AG04450 (cell line): ENCODE measurements at regions of chr3 and their contacts with region 1.

Region 1: DNA sequence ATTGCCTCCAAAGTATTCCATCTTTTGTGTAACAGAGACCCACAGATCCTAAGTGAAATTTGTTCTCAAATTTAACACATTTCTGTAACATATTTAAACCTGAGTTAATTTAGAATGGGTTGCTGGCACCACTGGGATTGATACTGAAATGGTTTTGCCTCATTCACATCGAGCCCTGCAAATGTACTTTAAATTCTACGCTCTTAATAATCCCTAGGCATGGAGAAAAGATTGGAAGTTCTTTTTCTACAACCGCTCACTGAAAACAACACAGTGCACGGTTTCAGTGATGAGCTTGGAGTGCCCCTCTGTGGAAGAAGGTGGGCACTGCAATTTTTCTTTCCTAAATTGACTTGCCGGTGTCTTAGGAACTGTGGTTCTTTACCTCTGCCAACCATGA is 109.9 kb upstream of the ATP11B start:
- DNase-seq: peak; percentile 29
- H3K4me3 ChIP-seq: no peak overlapping the region
- H3K27ac ChIP-seq: no peak overlapping the region
- H3K27me3 ChIP-seq: peaks cover 11% of the 10 kb centered on the region
- CTCF ChIP-seq: peak; percentile 94

Region 2: DNA sequence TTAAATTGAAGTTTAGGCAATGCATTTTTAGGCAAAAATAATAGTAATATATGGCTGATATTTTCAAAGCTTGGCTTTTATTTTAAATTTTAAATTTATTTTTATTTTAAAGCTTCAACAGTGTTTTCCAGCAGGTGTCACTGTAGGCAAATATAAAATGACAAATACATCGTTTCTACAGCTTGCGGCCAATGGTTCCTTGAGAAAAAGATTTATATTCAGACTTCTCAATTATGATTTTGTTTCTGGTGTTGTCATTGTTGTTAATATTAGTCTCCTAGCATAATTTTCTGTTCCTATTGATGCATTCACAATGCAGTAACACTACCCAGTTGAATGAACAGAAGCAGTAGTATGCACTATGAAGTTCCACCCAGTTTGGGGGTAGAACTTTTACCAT is 1473.2 kb before region 1 on chr3:
- CTCF ChIA-PET with region 1: interaction called, 19 read pairs
- POLR2A ChIA-PET with region 1: no interaction called
- DNase-seq: no peak
- H3K4me3 ChIP-seq: no peak overlapping the region
- H3K27ac ChIP-seq: no peak overlapping the region
- H3K27me3 ChIP-seq: no peaks in the 10 kb centered on the region
- CTCF ChIP-seq: peak; percentile 39

Region 3: GRCh38 chr3:181700168-181701087 is 983.0 kb before region 1 on chr3:
- CTCF ChIA-PET with region 1: interaction called, 47 read pairs
- POLR2A ChIA-PET with region 1: no interaction called
- DNase-seq: peak; percentile 26
- H3K4me3 ChIP-seq: no peak overlapping the region
- H3K27ac ChIP-seq: no peak overlapping the region
- H3K27me3 ChIP-seq: peaks cover 56% of the 10 kb centered on the region
- CTCF ChIP-seq: peak; percentile 93

Region 4: GRCh38 chr3:181709537-181710279 is 973.7 kb before region 1 on chr3:
- CTCF ChIA-PET with region 1: interaction called, 147 read pairs
- POLR2A ChIA-PET with region 1: no interaction called
- DNase-seq: no peak
- H3K4me3 ChIP-seq: no peak overlapping the region
- H3K27ac ChIP-seq: no peak overlapping the region
- H3K27me3 ChIP-seq: peaks cover 43% of the 10 kb centered on the region
- CTCF ChIP-seq: peak; percentile 76

Region 5: GRCh38 chr3:182342252-182342862 is 341.1 kb before region 1 on chr3:
- CTCF ChIA-PET with region 1: no interaction called
- POLR2A ChIA-PET with region 1: no interaction called
- DNase-seq: no peak
- H3K4me3 ChIP-seq: no peak overlapping the region
- H3K27ac ChIP-seq: no peak overlapping the region
- H3K27me3 ChIP-seq: no peaks in the 10 kb centered on the region
- CTCF ChIP-seq: no peak

Region 6: GRCh38 chr3:182713743-182714517 is 30.5 kb after region 1 on chr3:
- CTCF ChIA-PET with region 1: interaction called, 10 read pairs
- POLR2A ChIA-PET with region 1: no interaction called
- DNase-seq: peak; percentile 36
- H3K4me3 ChIP-seq: no peak overlapping the region
- H3K27ac ChIP-seq: no peak overlapping the region
- H3K27me3 ChIP-seq: no peaks in the 10 kb centered on the region
- CTCF ChIP-seq: peak; percentile 62